H1 (cell line): ENCODE measurements at regions of chr15 and their contacts with region 1.

Region 1: GRCh38 chr15:92097474-92098178 is 244.1 kb downstream of the SLCO3A1 start:
- DNase-seq: peak in 1 of 2 experiments; percentile 74
- H3K4me3 ChIP-seq: no peak overlapping the region
- H3K27ac ChIP-seq: no peak overlapping the region
- H3K4me1 ChIP-seq: peaks cover 9 to 20% (median 15%) of the 10 kb centered on the region in 4 experiments
- H3K27me3 ChIP-seq: no peaks in the 10 kb centered on the region; a peak in 2 of 7 replicates
- CTCF ChIP-seq: peak; percentile 83 to 93 (median 90)
- EP300 ChIP-seq: no peak
- POLR2A ChIP-seq: no peak
- RAD21 ChIP-seq: peak; percentile 97 to 98

Region 2: DNA sequence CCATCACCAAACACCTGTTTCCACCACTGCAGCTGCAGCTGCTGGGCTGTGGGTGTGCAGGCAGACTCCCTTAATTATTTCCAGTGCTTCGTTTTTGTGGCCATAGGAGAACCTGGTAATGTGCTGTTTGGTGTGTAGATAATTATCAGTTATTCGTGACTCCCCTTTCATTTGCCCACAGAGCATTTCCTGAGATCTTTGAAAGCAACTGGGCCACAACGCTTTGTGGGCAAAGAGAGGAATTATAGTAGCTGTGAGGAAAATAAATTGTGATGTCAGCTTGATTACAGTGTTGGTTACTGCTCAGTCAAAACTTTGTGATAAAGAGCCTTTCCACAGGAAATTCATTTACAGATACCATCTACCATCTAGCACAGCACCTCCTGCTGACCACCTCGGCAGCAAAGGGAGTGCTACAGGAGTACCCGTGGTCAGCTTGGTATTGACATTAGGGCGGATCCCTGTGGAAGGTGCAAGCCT is 437.4 kb before region 1 on chr15:
- CTCF ChIA-PET with region 1: no interaction called
- POLR2A ChIA-PET with region 1: no interaction called
- DNase-seq: no peak
- H3K4me3 ChIP-seq: no peak overlapping the region
- H3K27ac ChIP-seq: no peak overlapping the region
- H3K4me1 ChIP-seq: no peaks in the 10 kb centered on the region
- H3K27me3 ChIP-seq: peaks cover 0 to 1% (median 0%) of the 10 kb centered on the region in 4 experiments; a peak in 1 of 7 replicates
- CTCF ChIP-seq: peak; percentile 54 to 61 (median 56)
- EP300 ChIP-seq: no peak
- POLR2A ChIP-seq: no peak
- RAD21 ChIP-seq: peak; percentile 44 to 54

Region 3: DNA sequence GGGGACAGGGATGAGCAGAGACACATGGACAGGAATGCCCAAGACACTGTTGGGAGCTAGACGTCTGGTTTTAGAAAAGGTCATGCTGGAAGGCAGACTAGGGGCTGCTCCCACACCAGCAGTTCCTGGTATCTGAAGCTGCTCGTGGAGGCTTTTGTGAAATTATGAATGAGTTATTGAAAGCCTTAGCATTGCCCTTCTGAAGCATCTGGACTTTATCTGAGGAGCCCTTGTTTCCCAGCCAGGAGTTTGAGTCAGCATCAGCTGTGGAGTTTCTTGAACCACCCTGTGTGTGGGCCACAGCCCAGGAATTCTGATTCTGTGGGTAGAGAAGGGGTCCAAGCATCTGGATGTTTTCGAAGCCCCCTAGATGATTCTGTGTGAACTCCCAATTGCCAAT is 14.6 kb after region 1 on chr15:
- CTCF ChIA-PET with region 1: interaction called, 39 read pairs
- POLR2A ChIA-PET with region 1: interaction called, 3 read pairs
- DNase-seq: no peak
- H3K4me3 ChIP-seq: no peak overlapping the region
- H3K27ac ChIP-seq: no peak overlapping the region
- H3K4me1 ChIP-seq: peaks cover 7 to 19% (median 14%) of the 10 kb centered on the region in 4 experiments; a peak in 6 of 7 replicates
- H3K27me3 ChIP-seq: no peaks in the 10 kb centered on the region
- CTCF ChIP-seq: no peak
- EP300 ChIP-seq: no peak
- POLR2A ChIP-seq: no peak
- RAD21 ChIP-seq: no peak

Region 4: DNA sequence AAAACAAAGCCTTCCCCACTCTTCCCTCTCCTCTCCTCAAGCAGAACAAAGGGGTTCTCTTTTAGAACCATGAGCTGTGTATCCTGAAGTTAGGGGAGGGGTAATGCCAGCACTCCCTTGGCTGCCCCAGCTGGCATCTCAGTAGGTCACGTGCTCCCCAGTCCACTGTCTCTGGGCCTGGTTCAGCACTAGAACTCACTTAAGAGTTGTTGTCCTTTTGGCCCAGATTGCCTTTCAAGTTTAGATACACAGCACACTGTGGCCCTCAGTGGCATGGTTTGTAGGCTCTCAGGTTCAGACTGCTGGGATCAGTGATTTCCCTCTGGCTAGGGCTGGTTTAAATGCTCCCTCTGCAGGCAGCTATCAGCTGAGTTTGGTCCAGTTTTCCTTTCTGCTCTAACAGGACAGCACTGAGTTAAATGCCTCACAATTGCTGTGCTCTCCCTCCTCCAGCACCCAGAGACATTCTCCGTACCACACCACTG is 107.7 kb after region 1 on chr15:
- CTCF ChIA-PET with region 1: interaction called, 22 read pairs
- POLR2A ChIA-PET with region 1: interaction called, 3 read pairs
- DNase-seq: peak in 1 of 2 experiments; percentile 50
- H3K4me3 ChIP-seq: no peak overlapping the region
- H3K27ac ChIP-seq: no peak overlapping the region
- H3K4me1 ChIP-seq: peaks cover 2 to 9% (median 5%) of the 10 kb centered on the region in 4 experiments; a peak in 5 of 7 replicates
- H3K27me3 ChIP-seq: no peaks in the 10 kb centered on the region
- CTCF ChIP-seq: peak in 2 of 3 experiments; percentile 52 to 63; a peak in 3 of 4 replicates
- EP300 ChIP-seq: no peak
- POLR2A ChIP-seq: no peak
- RAD21 ChIP-seq: peak; percentile 64 to 73

Region 5: DNA sequence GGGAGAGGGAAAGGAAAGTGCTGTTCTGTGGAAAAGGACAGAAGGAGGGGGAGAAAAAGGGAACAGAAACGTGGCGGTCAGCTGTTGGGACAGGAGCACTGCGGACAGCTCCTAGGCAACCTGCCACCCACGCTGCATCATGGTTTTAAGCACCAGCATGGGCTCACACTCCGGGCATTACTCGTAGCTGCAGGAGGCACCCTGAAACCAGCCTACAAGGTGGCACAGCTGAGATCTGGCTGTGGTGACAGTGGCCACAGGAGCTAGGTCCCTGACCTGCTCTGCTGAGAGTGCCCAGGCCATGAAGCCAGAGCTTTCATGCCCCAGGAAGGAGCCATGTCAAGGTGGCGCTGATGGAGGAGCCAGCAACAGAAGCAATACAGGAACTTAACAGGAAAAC is 134.7 kb after region 1 on chr15:
- CTCF ChIA-PET with region 1: interaction called, 71 read pairs
- POLR2A ChIA-PET with region 1: no interaction called
- DNase-seq: no peak
- H3K4me3 ChIP-seq: no peak overlapping the region
- H3K27ac ChIP-seq: no peak overlapping the region
- H3K4me1 ChIP-seq: no peaks in the 10 kb centered on the region; a peak in 1 of 7 replicates
- H3K27me3 ChIP-seq: no peaks in the 10 kb centered on the region
- CTCF ChIP-seq: no peak
- EP300 ChIP-seq: no peak
- POLR2A ChIP-seq: no peak
- RAD21 ChIP-seq: no peak

Region 6: DNA sequence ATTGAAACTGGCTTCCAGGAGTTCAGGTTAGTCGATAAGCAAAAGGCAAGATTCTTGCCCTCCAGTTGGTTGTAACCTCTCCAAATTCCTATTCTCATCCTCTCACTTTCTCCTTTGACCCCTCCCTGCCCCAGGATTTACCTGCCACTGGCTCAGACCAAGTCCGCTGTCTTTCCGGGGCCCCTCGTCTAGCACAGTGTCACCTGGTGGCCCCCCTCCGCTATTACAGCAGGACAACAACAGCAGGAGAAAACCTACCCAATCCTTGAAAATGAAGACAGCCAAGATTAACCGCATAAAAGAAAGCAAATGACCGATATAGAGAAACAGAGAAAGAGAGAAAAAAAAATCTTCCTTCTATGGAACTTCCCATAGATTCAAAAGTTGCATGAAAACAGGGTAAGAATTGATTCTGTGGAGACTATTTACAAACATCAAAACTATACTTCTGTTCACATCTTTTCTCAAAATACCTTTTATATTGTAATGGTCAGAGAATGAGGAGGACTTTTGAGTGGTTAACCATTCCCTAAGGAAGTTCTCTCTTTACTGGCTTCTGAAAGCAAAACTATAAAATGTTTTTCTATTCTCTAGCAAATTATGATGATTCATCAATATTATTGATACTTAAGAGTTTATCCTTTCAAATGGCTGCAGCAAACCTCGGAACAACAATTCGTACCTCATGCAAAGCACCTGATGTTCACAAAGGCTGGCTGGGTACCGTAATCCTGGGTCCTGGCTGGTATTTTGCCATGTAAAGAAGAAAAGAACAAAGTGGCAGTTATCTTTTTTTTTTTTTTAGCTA is 286.1 kb after region 1 on chr15:
- CTCF ChIA-PET with region 1: interaction called, 17 read pairs
- POLR2A ChIA-PET with region 1: no interaction called
- DNase-seq: peak in 1 of 2 experiments; percentile 88
- H3K4me3 ChIP-seq: no peak overlapping the region
- H3K27ac ChIP-seq: no peak overlapping the region
- H3K4me1 ChIP-seq: peaks cover 0 to 3% (median 0%) of the 10 kb centered on the region in 4 experiments; a peak in 1 of 7 replicates
- H3K27me3 ChIP-seq: peaks cover 0 to 2% (median under 1%) of the 10 kb centered on the region in 4 experiments; a peak in 2 of 7 replicates
- CTCF ChIP-seq: peak; percentile 76 to 92 (median 82)
- EP300 ChIP-seq: peak in 1 of 2 experiments; percentile 78; a peak in 2 of 3 replicates
- POLR2A ChIP-seq: no peak
- RAD21 ChIP-seq: peak; percentile 82 to 87